ENCODE measurements at regions of chr2 and their contacts with region 1.

Region 1: DNA sequence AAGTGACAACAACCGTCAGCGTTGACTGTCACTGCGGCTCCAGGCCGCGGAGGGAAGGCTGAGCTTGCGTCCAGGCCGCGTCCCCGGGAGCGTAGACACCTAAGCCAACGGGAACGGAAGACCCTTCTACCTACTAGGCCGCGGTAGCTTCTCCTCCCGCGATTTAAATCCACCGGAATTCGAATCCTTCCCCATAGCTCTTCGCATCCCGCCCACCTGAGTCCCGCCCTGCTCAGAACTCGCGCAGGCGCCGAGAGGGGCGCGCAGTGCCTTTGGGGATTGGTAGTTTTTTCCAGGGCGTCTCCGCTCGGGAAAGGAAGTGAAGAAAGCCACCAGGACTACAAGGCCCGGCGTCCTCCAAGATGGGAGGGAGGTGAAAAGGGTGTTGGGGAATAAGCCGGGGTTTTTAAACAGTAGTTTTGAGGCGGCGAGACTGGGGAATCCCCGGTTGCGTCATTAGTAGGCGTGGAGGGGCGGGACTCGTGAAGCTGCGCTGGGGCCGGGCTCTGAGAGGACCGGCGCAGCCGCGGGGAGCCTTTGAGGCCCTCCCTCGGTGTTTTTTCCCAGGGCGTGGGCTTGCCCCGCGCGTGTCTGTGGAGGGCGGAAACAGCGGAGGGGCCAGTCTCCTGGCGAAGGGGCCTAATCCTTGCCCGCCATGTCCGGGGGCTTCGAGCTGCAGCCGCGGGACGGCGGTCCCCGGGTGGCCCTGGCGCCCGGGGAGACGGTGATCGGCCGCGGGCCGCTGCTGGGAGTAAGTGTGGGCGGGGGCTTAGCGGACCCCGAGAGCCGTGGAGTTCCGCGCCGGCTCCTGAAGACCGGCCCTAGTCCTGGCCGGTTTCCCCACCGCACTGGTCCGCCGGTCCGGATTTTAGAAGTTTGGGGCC is at the starts of genes APLF and FBXO48:
- DNase-seq: peak; percentile 97 to 98
- H3K4me3 ChIP-seq: peak within 1 kb of the TSS; percentile 88
- H3K4me1 ChIP-seq: peaks cover 15% of the 10 kb centered on the region
- H3K27me3 ChIP-seq: no peaks in the 10 kb centered on the region

Region 2: DNA sequence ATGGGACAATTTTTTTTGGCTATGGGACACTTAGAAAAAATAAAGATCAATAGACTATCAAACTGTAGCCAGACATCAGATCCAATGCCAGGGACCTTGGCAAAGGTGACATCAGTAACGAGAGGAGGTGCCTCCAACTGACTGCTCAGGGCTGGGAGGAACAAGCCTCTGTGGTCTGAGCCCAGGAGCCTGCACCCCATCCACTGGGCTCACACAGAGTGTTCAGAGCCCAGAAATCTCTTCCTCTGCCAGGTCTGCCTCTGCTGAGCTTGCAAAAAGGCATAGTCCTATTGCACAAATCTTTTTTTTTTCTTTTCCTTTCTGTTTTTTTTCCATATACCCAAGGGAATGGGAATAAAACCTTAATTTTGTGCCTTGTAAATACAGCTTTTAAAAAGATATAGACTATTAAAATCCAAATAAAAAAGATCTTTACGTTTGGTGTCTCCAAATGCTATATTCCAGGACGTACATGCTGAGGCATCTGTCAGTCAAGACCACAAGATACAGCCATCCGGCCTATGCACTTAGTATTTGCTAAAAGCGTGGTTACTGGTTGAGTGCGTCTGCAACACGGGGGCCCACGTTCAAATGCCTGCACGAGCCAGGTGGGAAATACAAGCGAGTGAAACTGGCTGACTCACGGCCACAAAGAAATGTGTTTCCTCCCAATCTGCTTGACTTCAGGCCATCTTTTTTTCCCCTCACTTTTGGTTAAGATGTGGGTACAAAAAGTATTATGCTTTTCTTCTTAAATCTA is 259.5 kb after region 1 on chr2:
- in situ Hi-C with region 1: loop called (anchors 25 kb)
- DNase-seq: no peak
- H3K4me3 ChIP-seq: no peak overlapping the region
- H3K4me1 ChIP-seq: no peaks in the 10 kb centered on the region
- H3K27me3 ChIP-seq: no peaks in the 10 kb centered on the region

Region 3: GRCh38 chr2:68909793-68910674 is 442.7 kb after region 1 on chr2:
- in situ Hi-C with region 1: loop called (anchors 10 kb)
- DNase-seq: peak; percentile 48 to 82
- H3K4me3 ChIP-seq: no peak overlapping the region
- H3K4me1 ChIP-seq: peaks cover 18% of the 10 kb centered on the region
- H3K27me3 ChIP-seq: no peaks in the 10 kb centered on the region

Region 4: DNA sequence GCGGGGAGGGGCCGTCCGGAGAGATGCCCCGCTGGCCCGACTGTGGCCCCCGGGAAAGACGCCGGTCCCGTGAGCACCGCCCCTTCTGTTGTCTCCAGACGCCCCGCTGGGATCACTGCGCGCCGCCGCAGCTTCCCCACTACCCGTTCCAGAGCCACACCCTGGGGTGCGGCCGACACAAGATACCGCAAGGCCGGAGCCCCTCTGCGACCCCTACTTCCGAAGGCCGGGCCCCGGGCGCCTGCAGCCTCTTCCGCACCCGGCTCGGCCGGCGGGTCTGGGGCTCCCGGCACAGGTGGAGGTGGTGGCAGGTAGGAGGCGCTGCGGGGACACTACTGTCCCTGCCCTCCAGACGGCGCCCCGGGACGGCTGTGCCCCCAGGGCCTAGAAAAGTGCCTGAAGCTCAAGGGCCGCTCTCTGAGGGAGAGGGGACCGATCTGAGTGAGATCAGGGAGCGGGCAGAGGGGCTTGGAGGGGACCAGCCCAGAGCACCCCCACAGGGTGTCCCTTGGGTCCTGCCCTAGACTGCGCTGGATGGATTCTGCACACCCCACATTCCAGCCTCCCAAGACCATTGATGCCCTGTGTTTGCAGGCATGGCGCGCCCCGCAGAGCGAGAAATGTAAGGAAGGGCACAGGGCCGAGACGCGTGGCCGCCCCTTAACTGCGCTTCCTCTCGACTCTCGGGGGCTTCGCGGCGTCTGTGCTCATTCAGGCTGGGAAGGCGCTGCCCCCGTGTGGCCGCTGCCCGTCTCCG is 839.7 kb after region 1 on chr2:
- in situ Hi-C with region 1: loop called (anchors 25 kb)
- DNase-seq: peak; percentile 70 to 91
- H3K4me3 ChIP-seq: peak overlapping the region; percentile 50
- H3K4me1 ChIP-seq: peaks cover 10% of the 10 kb centered on the region
- H3K27me3 ChIP-seq: no peaks in the 10 kb centered on the region

Measured in HAP-1 (cell line).